ENCODE measurements at regions of chr21 and their contacts with region 1.

Region 1: DNA sequence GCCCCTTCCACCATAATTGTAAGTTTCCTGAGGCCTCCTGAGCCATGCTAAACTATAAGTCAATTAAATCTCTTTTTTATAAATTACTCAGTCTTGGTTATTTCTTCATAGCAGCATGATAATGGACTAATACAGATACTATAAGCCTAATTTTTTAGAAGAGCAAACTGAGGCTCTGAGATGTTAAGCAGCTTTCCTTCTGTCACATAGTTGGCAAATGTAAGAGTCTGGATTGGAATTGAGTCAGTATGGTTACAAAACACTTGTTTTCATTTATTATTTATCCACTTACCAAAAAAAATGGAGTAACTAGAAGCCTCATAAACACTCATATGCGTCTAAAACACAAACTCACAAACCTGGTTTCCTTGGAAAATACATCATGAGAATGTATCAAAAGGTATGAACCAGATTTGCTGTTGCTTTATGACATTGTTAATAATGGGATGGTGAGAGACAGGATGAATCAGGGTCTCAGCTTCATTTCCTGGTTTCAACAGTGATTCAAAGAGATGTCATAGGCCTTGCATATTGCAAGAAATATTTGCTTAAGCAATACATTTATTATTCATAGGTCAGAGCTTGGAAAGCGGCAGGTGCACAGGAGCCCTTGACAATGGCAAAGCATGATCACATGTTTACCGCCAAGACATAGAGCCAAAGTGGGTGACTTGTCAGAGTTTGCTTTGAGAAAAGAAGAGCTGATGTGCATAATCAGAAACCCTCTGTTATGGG is 221.5 kb downstream of the GRIK1 start:
- DNase-seq: peak; percentile 34
- ATAC-seq: no peak
- H3K4me3 ChIP-seq: no peak overlapping the region
- H3K27ac ChIP-seq: no peak overlapping the region
- H3K4me1 ChIP-seq: no peaks in the 10 kb centered on the region
- H3K27me3 ChIP-seq: no peaks in the 10 kb centered on the region
- CTCF ChIP-seq: no peak
- POLR2A ChIP-seq: no peak
- RAD21 ChIP-seq: no peak

Region 2: GRCh38 chr21:29318354-29318753 is 399.9 kb before region 1 on chr21:
- CTCF ChIA-PET with region 1: no interaction called
- POLR2A ChIA-PET with region 1: no interaction called
- dilution Hi-C with region 1: no loop called
- in situ Hi-C with region 1: no loop called
- intact Hi-C with region 1: loop called (anchors 10 kb)
- DNase-seq: peak; percentile 52
- ATAC-seq: peak; percentile 19; the same call in 1 of the 2 replicates
- H3K4me3 ChIP-seq: no peak overlapping the region
- H3K27ac ChIP-seq: no peak overlapping the region
- H3K4me1 ChIP-seq: peaks cover 24% of the 10 kb centered on the region
- H3K27me3 ChIP-seq: no peaks in the 10 kb centered on the region
- CTCF ChIP-seq: no peak
- POLR2A ChIP-seq: 0 out of 2 replicates have a peak, but pooled peaks have one; percentile 10
- RAD21 ChIP-seq: no peak

Region 3: DNA sequence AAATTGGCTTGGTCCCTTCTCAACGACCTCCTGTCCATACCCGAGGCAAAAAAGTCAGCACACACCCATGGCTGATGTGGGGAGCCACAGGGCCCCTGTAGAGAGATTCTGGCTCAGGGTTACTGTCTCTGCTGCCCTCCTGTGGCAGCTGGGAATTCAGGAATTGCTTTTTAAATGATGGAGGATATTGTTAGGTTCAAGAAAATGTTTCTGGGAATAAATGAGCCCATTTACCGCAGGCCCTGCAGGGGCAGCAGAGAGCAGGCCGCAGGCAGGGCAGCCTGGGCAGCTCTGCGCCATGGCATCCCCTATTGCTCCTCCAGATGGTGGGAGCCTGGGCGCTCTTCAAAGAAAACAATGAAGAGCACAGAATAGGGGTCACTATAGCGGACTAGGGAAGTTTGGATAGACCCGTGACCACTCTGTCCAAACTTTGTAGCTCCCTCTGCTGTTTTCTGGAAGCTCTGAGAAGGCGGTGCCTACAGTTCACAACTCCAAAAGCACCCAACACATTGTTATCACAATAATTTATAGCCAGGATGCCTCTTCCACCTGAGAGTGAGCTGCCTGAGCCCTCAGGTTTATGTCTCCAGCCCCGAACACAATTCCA is 218.4 kb before region 1 on chr21:
- CTCF ChIA-PET with region 1: no interaction called
- POLR2A ChIA-PET with region 1: no interaction called
- dilution Hi-C with region 1: no loop called
- in situ Hi-C with region 1: no loop called
- intact Hi-C with region 1: loop called (anchors 5 kb)
- DNase-seq: no peak
- ATAC-seq: no peak
- H3K4me3 ChIP-seq: no peak overlapping the region
- H3K27ac ChIP-seq: no peak overlapping the region
- H3K4me1 ChIP-seq: peaks cover 5% of the 10 kb centered on the region; the same call in 1 of the 2 replicates
- H3K27me3 ChIP-seq: no peaks in the 10 kb centered on the region
- CTCF ChIP-seq: peak; percentile 59
- POLR2A ChIP-seq: no peak
- RAD21 ChIP-seq: peak; percentile 51

Region 4: DNA sequence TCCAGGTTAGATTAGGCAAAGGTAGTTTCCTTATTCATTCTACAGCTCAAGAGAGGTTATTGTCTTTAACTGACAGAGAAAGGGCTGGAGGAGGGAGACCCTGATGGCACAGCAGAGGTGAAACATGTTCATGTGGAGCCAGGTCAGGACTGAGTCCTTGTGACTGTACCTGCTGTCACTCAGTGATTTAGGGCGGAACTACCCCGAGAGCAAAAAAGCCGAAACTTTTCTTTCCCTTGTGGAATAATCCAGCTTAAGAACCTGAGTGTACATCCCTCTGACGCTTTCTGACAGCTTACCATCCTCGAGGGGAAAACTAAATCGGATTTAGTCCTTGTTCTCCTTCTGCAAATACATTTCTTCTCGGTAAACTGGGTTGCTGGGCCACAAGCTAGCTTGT is 146.3 kb before region 1 on chr21:
- CTCF ChIA-PET with region 1: no interaction called
- POLR2A ChIA-PET with region 1: no interaction called
- dilution Hi-C with region 1: no loop called
- in situ Hi-C with region 1: no loop called
- intact Hi-C with region 1: no loop called
- DNase-seq: no peak
- ATAC-seq: no peak
- H3K4me3 ChIP-seq: no peak overlapping the region
- H3K27ac ChIP-seq: no peak overlapping the region
- H3K4me1 ChIP-seq: no peaks in the 10 kb centered on the region
- H3K27me3 ChIP-seq: no peaks in the 10 kb centered on the region
- CTCF ChIP-seq: no peak
- POLR2A ChIP-seq: no peak
- RAD21 ChIP-seq: no peak

Region 5: GRCh38 chr21:29943885-29944284 is 225.6 kb after region 1 on chr21:
- CTCF ChIA-PET with region 1: no interaction called
- POLR2A ChIA-PET with region 1: no interaction called
- dilution Hi-C with region 1: no loop called
- in situ Hi-C with region 1: no loop called
- intact Hi-C with region 1: no loop called
- DNase-seq: no peak
- ATAC-seq: no peak
- H3K4me3 ChIP-seq: no peak overlapping the region
- H3K27ac ChIP-seq: no peak overlapping the region
- H3K4me1 ChIP-seq: no peaks in the 10 kb centered on the region
- H3K27me3 ChIP-seq: peaks cover 12% of the 10 kb centered on the region
- CTCF ChIP-seq: no peak
- POLR2A ChIP-seq: no peak
- RAD21 ChIP-seq: no peak

Measured in IMR-90 (cell line).